Activated CD4-positive, alpha-beta T cell treated with anti-CD3 and anti-CD28 coated beads for 36 hours (primary cell): ENCODE measurements at regions of chr12 and their contacts with region 1.

Region 1: GRCh38 chr12:54279866-54280467 is at the start of gene CBX5:
- DNase-seq: peak; percentile 100
- ATAC-seq: peak; percentile 50
- H3K4me3 Mint-ChIP-seq: no peak within 1 kb of the TSS
- H3K27ac Mint-ChIP-seq: no peak within 1 kb of the TSS
- H3K4me1 Mint-ChIP-seq: peaks cover 52% of the 10 kb centered on the region
- H3K27me3 Mint-ChIP-seq: no peaks in the 10 kb centered on the region
- total RNA-seq, gene CBX5: 140 to 146 TPM

Region 2: DNA sequence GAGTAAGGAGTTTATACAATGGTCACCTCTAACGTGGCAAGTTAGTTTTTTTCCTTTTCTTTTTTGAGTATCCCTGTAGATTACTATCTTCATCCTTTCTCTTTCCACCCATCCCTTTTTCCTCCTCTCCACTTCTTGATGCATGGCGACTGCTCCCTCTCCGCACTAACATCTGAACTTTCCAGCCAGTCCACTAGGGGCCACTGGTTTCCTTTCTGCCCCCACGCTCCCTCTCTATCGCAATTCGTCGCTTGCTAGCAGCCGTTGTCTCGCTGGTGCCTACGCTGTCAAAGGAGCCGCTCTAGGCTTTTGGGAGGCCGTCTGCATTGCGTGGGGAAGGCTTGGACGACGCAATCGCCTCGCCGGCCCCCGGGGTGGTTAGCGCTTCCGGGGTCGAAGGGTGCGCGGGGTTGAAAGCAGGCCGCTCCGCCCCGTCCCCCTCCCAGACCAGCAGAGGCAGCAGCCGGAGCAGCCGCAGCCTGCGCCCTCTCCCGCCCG is 828.3 kb before region 1 on chr12 and contains the start of gene PCBP2:
- CTCF ChIA-PET with region 1: no interaction called
- POLR2A ChIA-PET with region 1: no interaction called
- intact Hi-C with region 1: loop called in 1 of 2 experiments (anchors 5 kb)
- DNase-seq: peak; percentile 99
- ATAC-seq: peak; percentile 97
- H3K4me3 Mint-ChIP-seq: peak within 1 kb of the TSS; percentile 94
- H3K27ac Mint-ChIP-seq: peak within 1 kb of the TSS; percentile 96
- H3K4me1 Mint-ChIP-seq: peaks cover 27% of the 10 kb centered on the region
- H3K27me3 Mint-ChIP-seq: no peaks in the 10 kb centered on the region
- total RNA-seq, gene PCBP2: 881 to 999 TPM

Region 3: GRCh38 chr12:53727310-53728041 is 552.5 kb before region 1 on chr12 and contains the start of gene CALCOCO1:
- CTCF ChIA-PET with region 1: no interaction called
- POLR2A ChIA-PET with region 1: no interaction called
- intact Hi-C with region 1: loop called in 1 of 2 experiments (anchors 2 kb)
- DNase-seq: peak; percentile 99
- ATAC-seq: peak; percentile 99
- H3K4me3 Mint-ChIP-seq: peak within 1 kb of the TSS; percentile 80
- H3K27ac Mint-ChIP-seq: peak within 1 kb of the TSS; percentile 73
- H3K4me1 Mint-ChIP-seq: peaks cover 20% of the 10 kb centered on the region
- H3K27me3 Mint-ChIP-seq: no peaks in the 10 kb centered on the region
- total RNA-seq, gene CALCOCO1: 17.1 to 20.4 TPM

Region 4: DNA sequence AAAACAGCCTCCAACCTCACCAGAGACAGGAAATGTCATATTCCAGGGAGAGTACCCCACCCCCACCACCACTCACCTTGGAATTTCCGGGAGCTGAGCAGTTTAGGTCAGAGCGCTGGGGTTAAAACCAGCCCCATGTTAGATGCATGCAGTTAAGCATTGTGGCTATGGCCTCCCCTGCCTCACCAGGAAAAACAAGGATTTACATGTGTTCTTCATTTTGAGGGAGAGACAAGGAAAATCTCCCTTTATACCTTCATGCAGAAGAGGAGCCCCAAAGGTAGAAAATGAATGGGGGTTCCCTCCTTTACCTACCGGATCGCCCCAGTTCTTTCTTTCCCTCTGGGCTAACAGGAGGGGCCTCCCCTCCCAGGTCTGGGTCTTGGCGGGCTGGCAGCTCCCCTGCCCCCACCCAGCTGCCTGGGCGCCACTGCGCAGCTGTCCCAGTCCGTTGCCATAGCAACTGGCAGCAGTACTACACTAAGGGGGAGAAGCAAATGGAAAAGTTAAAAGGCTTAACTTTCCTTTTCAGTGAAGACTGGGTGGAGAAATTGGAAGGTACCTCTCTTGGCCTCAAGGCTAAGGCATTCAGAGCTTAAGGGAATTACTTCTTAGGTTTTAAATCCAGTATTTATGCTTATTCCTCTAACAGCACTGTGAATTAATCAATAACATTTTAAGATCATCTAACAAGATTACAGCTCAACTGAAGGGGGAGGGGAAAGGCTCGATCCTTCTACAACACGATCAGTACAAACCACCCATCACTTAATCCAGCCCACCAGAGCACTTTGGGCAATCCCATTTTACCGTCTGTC is 20.6 kb before region 1 on chr12:
- CTCF ChIA-PET with region 1: interaction called, 6 read pairs
- POLR2A ChIA-PET with region 1: interaction called, 7 read pairs
- intact Hi-C with region 1: loop called in 1 of 2 experiments (anchors 2 kb)
- DNase-seq: peak; percentile 68
- ATAC-seq: peak; percentile 81
- H3K4me3 Mint-ChIP-seq: peak overlapping the region; percentile 59
- H3K27ac Mint-ChIP-seq: peak overlapping the region; percentile 49
- H3K4me1 Mint-ChIP-seq: peaks cover 39% of the 10 kb centered on the region
- H3K27me3 Mint-ChIP-seq: no peaks in the 10 kb centered on the region

Region 5: GRCh38 chr12:54359033-54359761 is 79.2 kb after region 1 on chr12:
- CTCF ChIA-PET with region 1: interaction called, 6 read pairs
- POLR2A ChIA-PET with region 1: interaction called, 44 read pairs
- intact Hi-C with region 1: loop called (anchors 1 kb)
- DNase-seq: peak; percentile 96
- ATAC-seq: peak; percentile 93
- H3K4me3 Mint-ChIP-seq: no peak overlapping the region
- H3K27ac Mint-ChIP-seq: no peak overlapping the region
- H3K4me1 Mint-ChIP-seq: peaks cover 18% of the 10 kb centered on the region
- H3K27me3 Mint-ChIP-seq: no peaks in the 10 kb centered on the region

Region 6: GRCh38 chr12:54984658-54985376 is 704.9 kb after region 1 on chr12 and contains the start of gene TESPA1:
- CTCF ChIA-PET with region 1: no interaction called
- POLR2A ChIA-PET with region 1: no interaction called
- intact Hi-C with region 1: loop called in 1 of 2 experiments (anchors 5 kb)
- DNase-seq: peak; percentile 92
- ATAC-seq: peak; percentile 87
- H3K4me3 Mint-ChIP-seq: peak within 1 kb of the TSS; percentile 78
- H3K27ac Mint-ChIP-seq: peak within 1 kb of the TSS; percentile 95
- H3K4me1 Mint-ChIP-seq: peaks cover 64% of the 10 kb centered on the region
- H3K27me3 Mint-ChIP-seq: no peaks in the 10 kb centered on the region
- total RNA-seq, gene TESPA1: 81.0 to 107 TPM